ENCODE measurements at regions of chr6 and their contacts with region 1.

Region 1: GRCh38 chr6:35370124-35370741 is 27.9 kb downstream of the PPARD start:
- DNase-seq: peak; percentile 73 to 76
- H3K4me3 ChIP-seq: no peak overlapping the region
- H3K27ac ChIP-seq: peak overlapping the region; percentile 80
- H3K4me1 ChIP-seq: peaks cover 34% of the 10 kb centered on the region
- H3K27me3 ChIP-seq: no peaks in the 10 kb centered on the region
- CTCF ChIP-seq: no peak

Region 2: DNA sequence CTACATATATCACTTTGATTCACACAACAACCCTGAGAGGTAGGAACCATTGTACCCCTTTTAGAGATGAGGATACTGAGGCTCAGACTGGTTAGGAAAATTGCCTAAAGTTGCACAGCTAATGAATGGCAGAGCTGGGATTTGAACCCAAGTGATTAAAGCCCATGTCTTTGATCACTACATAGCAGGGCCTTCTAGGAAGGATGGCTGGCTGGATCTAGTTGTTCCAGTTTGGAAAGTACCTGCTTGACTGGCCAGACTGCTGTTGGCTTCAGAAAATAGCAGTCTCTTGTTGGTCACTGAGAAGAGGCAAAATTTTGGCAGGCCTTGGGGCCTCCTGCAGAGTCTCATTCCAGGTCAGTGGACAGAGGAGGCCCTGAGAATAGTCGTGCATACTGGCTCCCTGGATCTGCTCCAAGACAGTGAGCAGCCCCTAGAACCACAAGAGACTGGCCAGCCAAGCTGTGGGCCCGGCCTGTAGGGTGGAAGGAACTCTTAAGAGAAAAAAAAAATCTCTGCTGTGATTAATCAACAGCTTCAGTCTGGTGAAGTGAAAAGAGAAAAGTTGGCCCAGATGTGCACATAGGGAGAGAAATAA is 10.4 kb before region 1 on chr6:
- CTCF ChIA-PET with region 1: no interaction called
- POLR2A ChIA-PET with region 1: no interaction called
- intact Hi-C with region 1: loop called (anchors 1 kb)
- DNase-seq: peak; percentile 80 to 92
- H3K4me3 ChIP-seq: no peak overlapping the region
- H3K27ac ChIP-seq: peak overlapping the region; percentile 79
- H3K4me1 ChIP-seq: peaks cover 25% of the 10 kb centered on the region
- H3K27me3 ChIP-seq: no peaks in the 10 kb centered on the region
- CTCF ChIP-seq: no peak